ENCODE measurements at regions of chr16 and their contacts with region 1.

Region 1: GRCh38 chr16:31094424-31095120 is at the start of gene VKORC1:
- DNase-seq: peak; percentile 96
- H3K4me3 Mint-ChIP-seq: peak within 1 kb of the TSS; percentile 95
- H3K27ac Mint-ChIP-seq: peak within 1 kb of the TSS; percentile 94
- H3K4me1 Mint-ChIP-seq: peaks cover 23% of the 10 kb centered on the region
- H3K27me3 Mint-ChIP-seq: no peaks in the 10 kb centered on the region
- total RNA-seq, gene VKORC1: 56.2 and 59.1 TPM in 2 replicates

Region 2: DNA sequence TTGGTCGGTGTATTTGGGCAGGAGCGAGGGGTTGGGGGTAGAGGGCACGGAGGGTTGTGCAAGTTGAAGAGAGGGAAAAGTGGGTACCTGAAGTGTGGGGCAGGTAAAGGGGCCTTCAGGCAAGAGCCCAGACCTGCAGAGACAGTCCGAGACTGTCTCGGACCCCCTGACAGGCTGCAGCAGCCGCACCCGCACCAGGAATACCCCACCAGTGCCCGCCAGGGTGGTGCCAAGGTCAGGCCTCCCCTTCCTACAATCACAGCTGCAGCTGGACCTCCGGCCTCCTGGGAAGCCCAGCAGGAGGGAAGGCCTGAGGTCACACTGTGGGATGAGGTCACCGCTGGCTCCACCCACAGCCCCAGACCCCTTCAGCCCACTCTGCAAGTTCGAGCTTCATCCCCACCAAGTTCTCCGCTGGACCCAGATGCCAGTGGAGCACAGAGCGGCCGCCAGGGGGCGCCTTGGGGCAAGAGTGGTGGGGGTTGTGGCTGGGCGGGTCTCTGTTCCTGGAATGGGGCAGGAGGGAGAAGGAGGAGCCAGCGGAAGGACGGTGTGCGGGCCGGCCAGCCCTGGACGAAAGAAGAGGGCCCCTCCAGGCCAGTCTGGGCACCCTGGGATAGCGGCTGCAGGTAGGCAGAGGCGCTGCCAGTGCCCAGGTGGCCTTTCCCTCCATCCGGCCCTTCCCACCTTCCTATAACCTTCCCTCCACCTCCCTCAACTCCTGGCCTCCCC is 109.7 kb before region 1 on chr16 and contains the start of gene HSD3B7:
- intact Hi-C with region 1: loop called (anchors 1 kb)
- DNase-seq: peak; percentile 96
- H3K4me3 Mint-ChIP-seq: peak within 1 kb of the TSS; percentile 52
- H3K27ac Mint-ChIP-seq: peak within 1 kb of the TSS; percentile 47
- H3K4me1 Mint-ChIP-seq: peaks cover 8% of the 10 kb centered on the region
- H3K27me3 Mint-ChIP-seq: no peaks in the 10 kb centered on the region
- total RNA-seq, gene HSD3B7: 2.9 and 3.2 TPM in 2 replicates

Region 3: DNA sequence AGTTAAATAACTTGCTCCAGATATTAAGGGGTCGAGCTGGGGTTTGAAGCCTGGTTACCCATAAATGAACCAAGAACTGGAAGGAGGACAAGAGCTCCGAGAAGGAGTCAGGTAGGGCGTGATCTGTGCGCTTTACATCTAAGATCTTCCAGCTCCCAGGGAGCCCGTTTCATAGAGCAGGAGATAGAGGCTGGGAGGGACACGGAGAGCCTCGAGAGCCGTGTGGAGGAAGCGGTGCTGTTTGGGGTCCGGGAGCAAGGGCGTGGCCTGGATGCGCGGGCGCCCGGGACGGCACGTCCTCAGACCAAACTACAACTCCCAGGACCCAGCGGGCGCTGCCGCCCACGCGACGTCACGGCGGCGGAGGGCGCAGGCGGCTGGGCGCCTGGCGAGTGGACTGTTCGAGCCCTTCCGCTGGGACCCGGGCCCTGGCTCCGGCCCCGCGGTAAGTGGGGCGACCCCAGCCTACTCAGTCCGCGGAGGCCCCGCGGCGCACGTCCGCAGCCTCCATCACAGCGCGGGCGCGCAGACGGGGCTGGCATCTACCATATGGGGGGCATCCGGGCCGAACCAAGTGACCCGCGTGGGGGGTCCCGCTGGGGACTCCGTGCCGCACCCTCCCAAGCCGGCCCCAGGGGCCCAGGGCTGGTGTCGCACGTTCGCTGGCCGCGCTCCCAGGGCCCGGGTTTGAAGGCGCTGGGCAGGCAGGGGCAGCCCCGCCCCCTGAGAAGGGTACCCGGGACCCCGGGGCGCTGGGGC is 13.6 kb after region 1 on chr16 and contains the start of gene BCKDK:
- intact Hi-C with region 1: loop called (anchors 2 kb)
- DNase-seq: peak; percentile 93
- H3K4me3 Mint-ChIP-seq: peak within 1 kb of the TSS; percentile 92
- H3K27ac Mint-ChIP-seq: peak within 1 kb of the TSS; percentile 95
- H3K4me1 Mint-ChIP-seq: peaks cover 22% of the 10 kb centered on the region
- H3K27me3 Mint-ChIP-seq: no peaks in the 10 kb centered on the region
- total RNA-seq, gene BCKDK: 44.3 and 44.9 TPM in 2 replicates

Region 4: GRCh38 chr16:31196324-31197088 is 101.9 kb after region 1 on chr16:
- intact Hi-C with region 1: no loop called
- DNase-seq: no peak
- H3K4me3 Mint-ChIP-seq: no peak overlapping the region
- H3K27ac Mint-ChIP-seq: no peak overlapping the region
- H3K4me1 Mint-ChIP-seq: peaks cover 57% of the 10 kb centered on the region
- H3K27me3 Mint-ChIP-seq: no peaks in the 10 kb centered on the region